Aorta (tissue), 5 donors: ENCODE measurements at regions of chr6 and their contacts with region 1.

Region 1: DNA sequence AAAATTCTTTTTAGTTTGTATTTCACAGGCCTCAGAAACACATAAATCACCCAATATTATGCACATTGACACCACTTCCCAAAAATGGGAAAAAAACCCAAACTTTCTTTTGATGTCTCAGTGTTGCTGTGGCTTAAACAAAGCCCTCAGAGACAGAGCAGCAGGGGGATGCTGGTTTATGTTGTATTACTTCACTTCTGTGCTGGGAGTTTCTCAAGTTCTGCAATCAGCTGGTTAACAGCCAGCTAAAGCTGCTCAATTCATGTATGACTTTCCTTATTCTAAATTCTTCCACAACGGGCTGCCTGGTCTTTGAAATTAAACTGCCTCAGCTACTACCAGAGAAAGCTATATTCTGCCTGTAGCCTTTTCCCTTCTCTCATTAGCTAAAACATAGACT is 5.6 kb downstream of the FILIP1 start:
- DNase-seq: no peak
- ATAC-seq: peak; percentile 13
- H3K4me3 ChIP-seq: peak overlapping the region; percentile 36 to 72
- H3K27ac ChIP-seq: peak overlapping the region; percentile 80 to 82
- H3K4me1 ChIP-seq: peaks cover 3 to 8% of the 10 kb centered on the region in 2 donors
- H3K27me3 ChIP-seq: no peaks in the 10 kb centered on the region

Region 2: DNA sequence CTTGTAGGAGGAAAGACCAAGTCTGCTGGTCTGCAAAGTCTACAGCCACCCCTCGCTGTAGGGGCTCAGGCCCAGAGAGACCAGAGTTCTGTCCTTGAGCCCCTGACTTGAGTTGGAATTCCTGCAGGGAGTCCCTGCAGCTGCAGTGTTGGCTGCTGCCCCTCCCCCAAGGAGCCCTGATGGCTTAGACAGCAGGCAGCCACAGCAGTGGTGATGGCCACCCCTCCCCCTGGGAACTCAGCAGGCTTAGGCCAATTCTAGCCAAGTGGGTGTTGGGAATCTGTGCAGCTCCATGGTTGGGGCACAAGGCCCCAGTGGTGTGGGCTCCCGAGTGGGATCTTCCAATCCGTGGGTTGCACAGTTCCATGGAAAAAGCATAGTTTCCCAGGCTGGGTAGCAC is 1446.6 kb before region 1 on chr6:
- intact Hi-C with region 1: no loop called
- DNase-seq: no peak
- ATAC-seq: no peak
- H3K4me3 ChIP-seq: no peak overlapping the region
- H3K27ac ChIP-seq: no peak overlapping the region
- H3K4me1 ChIP-seq: no peaks in the 10 kb centered on the region
- H3K27me3 ChIP-seq: no peaks in the 10 kb centered on the region

Region 3: DNA sequence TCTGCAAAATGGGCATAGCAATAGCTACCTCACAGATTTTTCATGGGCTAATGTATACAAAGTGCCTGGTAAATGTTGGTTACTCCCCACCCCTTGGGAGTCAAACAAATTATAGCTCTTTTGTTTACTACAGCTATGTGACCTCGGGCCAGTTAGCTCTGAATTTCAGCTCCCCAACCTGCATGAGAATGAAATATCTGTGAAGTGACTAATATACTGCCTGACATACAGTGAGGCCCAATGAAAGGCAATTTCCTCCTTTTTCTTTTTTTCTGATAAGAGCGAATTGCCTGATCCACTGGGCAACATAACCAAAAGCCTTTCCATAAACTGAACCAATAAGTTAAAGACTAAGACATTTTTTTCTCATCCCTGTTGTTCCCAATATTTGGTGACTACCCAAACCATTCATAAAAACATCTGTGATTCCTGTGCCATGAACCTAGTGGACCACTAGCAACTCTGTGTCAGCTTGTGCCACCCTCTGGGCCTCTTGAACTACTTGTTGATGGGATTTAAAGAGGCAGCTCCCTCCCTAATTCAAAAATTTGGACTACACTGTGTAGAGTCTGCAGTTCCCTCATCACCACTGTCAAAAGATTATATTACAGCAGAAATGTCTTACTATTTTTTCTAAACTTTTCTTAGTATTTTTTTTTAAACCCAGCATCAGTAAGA is 111.5 kb before region 1 on chr6:
- intact Hi-C with region 1: loop called in 1 of 2 experiments (anchors 10 kb)
- DNase-seq: no peak
- ATAC-seq: peak; percentile 33
- H3K4me3 ChIP-seq: no peak overlapping the region
- H3K27ac ChIP-seq: no peak overlapping the region
- H3K4me1 ChIP-seq: peaks cover 0 to 2% of the 10 kb centered on the region in 2 donors
- H3K27me3 ChIP-seq: no peaks in the 10 kb centered on the region

Region 4: DNA sequence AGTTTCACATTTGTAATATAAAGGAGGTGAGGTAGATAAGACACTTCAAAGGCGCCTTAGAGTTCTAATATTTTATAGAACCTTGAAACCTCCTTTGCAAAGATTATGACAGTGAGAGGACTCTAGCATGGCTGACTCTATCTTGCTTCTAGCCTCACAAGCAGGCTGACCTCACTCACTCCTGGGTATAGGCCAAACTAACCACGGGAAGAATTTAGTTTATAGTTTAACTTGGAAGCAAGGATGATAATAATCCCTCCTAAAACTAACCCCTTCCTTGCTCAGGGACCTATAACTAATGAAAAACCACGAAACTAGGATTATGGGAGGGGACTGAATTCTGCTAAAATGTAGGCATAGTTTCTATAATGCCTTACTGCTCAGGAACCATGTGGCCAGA is 78.7 kb before region 1 on chr6:
- intact Hi-C with region 1: no loop called
- DNase-seq: no peak
- ATAC-seq: peak; percentile 67
- H3K4me3 ChIP-seq: no peak overlapping the region
- H3K27ac ChIP-seq: peak overlapping the region in 1 of 2 donors; percentile 1
- H3K4me1 ChIP-seq: peaks cover 2 to 12% of the 10 kb centered on the region in 2 donors
- H3K27me3 ChIP-seq: no peaks in the 10 kb centered on the region

Region 5: GRCh38 chr6:75431379-75431778 is 56.7 kb before region 1 on chr6:
- intact Hi-C with region 1: loop called in 1 of 2 experiments (anchors 5 kb)
- DNase-seq: no peak
- ATAC-seq: peak; percentile 92
- H3K4me3 ChIP-seq: no peak overlapping the region
- H3K27ac ChIP-seq: peak overlapping the region; percentile 89 to 96
- H3K4me1 ChIP-seq: peaks cover 11 to 14% of the 10 kb centered on the region in 2 donors
- H3K27me3 ChIP-seq: no peaks in the 10 kb centered on the region